ENCODE measurements at regions of chrX and their contacts with region 1.

Region 1: DNA sequence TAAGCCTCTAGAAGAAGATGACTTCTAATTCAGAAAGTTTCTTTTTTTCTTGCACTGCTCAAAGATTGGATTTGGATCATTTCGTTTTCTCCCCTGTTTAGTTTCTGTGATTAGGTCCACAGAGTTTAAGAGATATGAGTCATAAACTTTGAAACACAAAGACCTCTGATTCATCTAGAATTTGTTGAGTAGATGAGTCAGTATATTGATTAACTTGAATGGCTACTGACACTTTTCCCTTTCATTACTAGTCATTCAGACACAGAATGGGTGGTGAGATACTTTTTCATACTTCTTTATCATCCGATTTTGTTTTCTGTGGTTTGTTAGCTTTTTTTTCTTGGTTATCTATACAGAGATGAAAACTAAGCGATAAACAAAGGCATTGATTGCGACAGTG is 34.1 kb upstream of the AFF2 start:
- DNase-seq: no peak
- H3K4me3 Mint-ChIP-seq: no peak overlapping the region
- H3K27ac Mint-ChIP-seq: no peak overlapping the region
- H3K4me1 Mint-ChIP-seq: peaks cover 14% of the 10 kb centered on the region
- H3K27me3 Mint-ChIP-seq: no peaks in the 10 kb centered on the region

Region 2: DNA sequence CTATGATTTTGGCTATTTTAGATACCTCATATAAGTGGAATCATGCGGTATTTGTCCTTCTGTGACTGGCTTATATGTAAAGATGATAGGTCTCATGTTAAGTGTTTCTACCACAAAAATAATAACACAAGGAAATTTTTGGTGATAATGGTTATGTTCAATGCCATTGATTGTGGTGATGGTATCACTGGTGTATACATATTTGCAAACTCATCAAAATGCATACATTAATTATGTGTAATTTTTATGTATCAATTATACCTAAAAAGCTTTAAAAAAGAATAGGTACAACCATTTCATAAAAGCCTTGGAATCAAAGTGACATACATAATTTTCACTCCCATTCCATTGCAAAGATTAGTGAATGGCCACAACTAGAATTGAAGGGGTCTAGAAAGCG is 732.9 kb before region 1 on chrX:
- CTCF ChIA-PET with region 1: no interaction called
- intact Hi-C with region 1: no loop called
- DNase-seq: no peak
- H3K4me3 Mint-ChIP-seq: no peak overlapping the region
- H3K27ac Mint-ChIP-seq: no peak overlapping the region
- H3K4me1 Mint-ChIP-seq: peaks cover 10% of the 10 kb centered on the region
- H3K27me3 Mint-ChIP-seq: no peaks in the 10 kb centered on the region

Region 3: DNA sequence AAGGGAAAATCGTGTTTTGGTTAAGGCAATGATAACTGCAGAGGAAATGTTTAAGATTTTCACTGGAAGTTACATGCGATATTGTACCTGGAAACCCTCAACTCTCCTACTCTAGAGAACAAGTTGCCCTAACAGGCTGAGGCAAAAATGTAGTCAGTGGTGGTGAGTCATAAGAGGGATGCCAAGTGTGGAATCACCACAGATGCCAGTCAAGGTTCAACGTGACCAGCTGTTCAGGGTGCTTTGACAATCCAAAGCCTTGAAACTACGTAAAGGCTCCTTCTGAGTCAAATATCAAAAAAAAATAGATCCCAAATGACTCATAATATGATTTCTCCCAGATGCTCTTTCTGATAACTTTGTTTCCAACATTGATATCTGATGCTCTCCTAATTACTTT is 43.8 kb before region 1 on chrX:
- CTCF ChIA-PET with region 1: no interaction called
- intact Hi-C with region 1: loop called (anchors 5 kb)
- DNase-seq: peak; percentile 6
- H3K4me3 Mint-ChIP-seq: no peak overlapping the region
- H3K27ac Mint-ChIP-seq: no peak overlapping the region
- H3K4me1 Mint-ChIP-seq: peaks cover 22% of the 10 kb centered on the region
- H3K27me3 Mint-ChIP-seq: no peaks in the 10 kb centered on the region

Region 4: DNA sequence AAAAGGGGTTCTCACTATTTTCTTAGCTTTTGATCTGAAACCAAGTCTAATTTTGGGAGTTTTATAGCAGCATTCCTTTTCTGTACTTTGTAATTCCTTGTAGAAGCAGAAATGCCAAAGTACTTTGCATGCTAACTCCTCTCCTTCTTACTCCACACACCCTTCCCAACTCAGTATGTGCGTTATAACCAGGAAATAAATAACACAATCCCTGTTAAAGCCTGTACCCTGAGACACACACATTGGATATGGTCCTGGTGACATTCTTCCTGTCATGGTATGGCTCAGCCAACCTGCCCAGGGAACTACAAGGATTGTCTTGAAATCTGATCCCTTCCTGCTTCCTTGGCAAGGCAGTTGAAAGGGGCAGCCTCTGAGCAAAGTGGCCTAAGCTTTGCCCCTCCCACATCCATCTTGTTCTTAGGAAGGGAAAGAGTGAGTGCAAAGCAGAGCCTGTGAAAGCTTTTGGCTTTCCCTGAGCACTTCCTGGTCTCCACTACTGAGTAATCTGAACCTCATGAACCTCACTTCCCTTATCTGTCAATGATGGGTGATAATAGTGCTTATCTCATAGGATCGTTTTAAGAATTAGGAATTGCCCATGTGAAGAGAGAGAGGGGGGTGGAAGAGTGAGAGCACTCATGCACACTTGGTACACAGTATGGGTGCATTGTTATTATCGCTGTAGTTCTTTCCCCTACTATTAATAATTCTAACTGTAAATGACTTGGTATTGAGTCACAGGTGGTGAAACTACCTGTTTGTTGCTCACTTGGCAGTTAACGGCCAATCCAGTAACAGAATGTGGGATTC is 143.4 kb after region 1 on chrX:
- CTCF ChIA-PET with region 1: no interaction called
- intact Hi-C with region 1: loop called (anchors 1 kb)
- DNase-seq: peak; percentile 4
- H3K4me3 Mint-ChIP-seq: peak overlapping the region; percentile 4
- H3K27ac Mint-ChIP-seq: no peak overlapping the region
- H3K4me1 Mint-ChIP-seq: peaks cover 27% of the 10 kb centered on the region
- H3K27me3 Mint-ChIP-seq: no peaks in the 10 kb centered on the region